Calu3 (cell line): ENCODE measurements at regions of chr12 and their contacts with region 1.

Region 1: DNA sequence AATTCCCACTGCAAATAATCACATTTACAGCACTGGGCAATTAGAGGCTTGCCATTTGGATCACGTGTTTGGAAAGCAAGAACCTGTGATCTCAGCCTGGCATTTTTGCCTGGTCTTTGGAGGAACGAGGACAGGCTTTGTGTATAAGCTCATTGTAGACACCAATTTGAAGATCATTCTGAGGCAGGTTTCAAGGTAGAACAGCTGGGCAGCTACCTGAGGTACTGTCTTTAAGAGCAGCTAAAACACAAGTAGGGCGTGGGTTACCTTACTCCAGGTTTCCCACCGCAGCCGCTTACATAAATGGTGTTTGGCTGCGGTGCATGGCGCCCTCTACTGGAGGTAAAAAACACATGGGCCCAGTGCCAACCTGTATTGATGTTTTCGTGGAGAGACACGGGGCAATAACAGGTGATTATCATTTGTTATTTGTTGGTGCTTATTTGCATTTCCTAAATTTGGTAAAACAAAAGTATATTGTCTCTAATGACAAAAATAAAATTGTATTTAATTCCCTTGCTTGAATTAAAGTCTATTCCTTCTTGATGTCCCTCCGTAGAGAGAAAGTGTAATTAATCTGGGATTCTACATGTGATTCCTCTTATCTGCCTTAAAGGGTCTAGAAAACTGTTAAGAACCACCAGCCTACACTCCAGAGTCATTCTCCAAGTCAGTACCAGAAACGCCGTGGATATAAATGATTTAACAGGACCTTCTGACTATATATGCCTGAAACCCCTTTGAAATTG is 69.7 kb downstream of the SVOP start:
- DNase-seq: peak; percentile 81
- H3K4me3 Mint-ChIP-seq: no peak overlapping the region
- H3K27ac Mint-ChIP-seq: no peak overlapping the region
- H3K4me1 Mint-ChIP-seq: no peaks in the 10 kb centered on the region
- H3K27me3 Mint-ChIP-seq: peaks cover 36% of the 10 kb centered on the region
- CTCF ChIP-seq: peak; percentile 87

Region 2: GRCh38 chr12:108826101-108826806 is 124.9 kb before region 1 on chr12:
- CTCF ChIA-PET with region 1: interaction called, 6 read pairs
- intact Hi-C with region 1: loop called (anchors 10 kb)
- DNase-seq: no peak
- H3K4me3 Mint-ChIP-seq: no peak overlapping the region
- H3K27ac Mint-ChIP-seq: peak overlapping the region; percentile 47
- H3K4me1 Mint-ChIP-seq: peaks cover 39% of the 10 kb centered on the region
- H3K27me3 Mint-ChIP-seq: no peaks in the 10 kb centered on the region
- CTCF ChIP-seq: no peak

Region 3: GRCh38 chr12:108884116-108885012 is 66.8 kb before region 1 on chr12:
- CTCF ChIA-PET with region 1: interaction called, 5 read pairs
- intact Hi-C with region 1: loop called (anchors 1 kb)
- DNase-seq: peak; percentile 68
- H3K4me3 Mint-ChIP-seq: no peak overlapping the region
- H3K27ac Mint-ChIP-seq: no peak overlapping the region
- H3K4me1 Mint-ChIP-seq: no peaks in the 10 kb centered on the region
- H3K27me3 Mint-ChIP-seq: peaks cover 8% of the 10 kb centered on the region
- CTCF ChIP-seq: peak; percentile 66

Region 4: GRCh38 chr12:108980831-108981618 is 29.9 kb after region 1 on chr12:
- CTCF ChIA-PET with region 1: interaction called, 11 read pairs
- intact Hi-C with region 1: no loop called
- DNase-seq: no peak
- H3K4me3 Mint-ChIP-seq: no peak overlapping the region
- H3K27ac Mint-ChIP-seq: no peak overlapping the region
- H3K4me1 Mint-ChIP-seq: no peaks in the 10 kb centered on the region
- H3K27me3 Mint-ChIP-seq: peaks cover 24% of the 10 kb centered on the region
- CTCF ChIP-seq: no peak